KBM-7 (cell line): ENCODE measurements at regions of chr9 and their contacts with region 1.

Region 1: GRCh38 chr9:19527663-19528062 is 118.9 kb downstream of the ACER2 start:
- DNase-seq: no peak

Region 2: GRCh38 chr9:19583890-19584289 is 56.2 kb after region 1 on chr9:
- in situ Hi-C with region 1: loop called (anchors 10 kb)
- DNase-seq: no peak